Activated CD4-positive, alpha-beta memory T cell treated with anti-CD3 and anti-CD28 coated beads for 36 hours (primary cell): ENCODE measurements at regions of chr4 and their contacts with region 1.

Region 1: GRCh38 chr4:128574706-128575105 is 234.8 kb upstream of the JADE1 start:
- DNase-seq: peak; percentile 82
- H3K4me3 Mint-ChIP-seq: no peak overlapping the region
- H3K27ac Mint-ChIP-seq: no peak overlapping the region
- H3K4me1 Mint-ChIP-seq: no peaks in the 10 kb centered on the region
- H3K27me3 Mint-ChIP-seq: peaks cover 4% of the 10 kb centered on the region

Region 2: GRCh38 chr4:128191115-128191781 is 383.5 kb before region 1 on chr4:
- CTCF ChIA-PET with region 1: no interaction called
- POLR2A ChIA-PET with region 1: no interaction called
- intact Hi-C with region 1: loop called (anchors 5 kb)
- DNase-seq: peak; percentile 80
- H3K4me3 Mint-ChIP-seq: no peak overlapping the region
- H3K27ac Mint-ChIP-seq: no peak overlapping the region
- H3K4me1 Mint-ChIP-seq: peaks cover 3% of the 10 kb centered on the region
- H3K27me3 Mint-ChIP-seq: no peaks in the 10 kb centered on the region

Region 3: DNA sequence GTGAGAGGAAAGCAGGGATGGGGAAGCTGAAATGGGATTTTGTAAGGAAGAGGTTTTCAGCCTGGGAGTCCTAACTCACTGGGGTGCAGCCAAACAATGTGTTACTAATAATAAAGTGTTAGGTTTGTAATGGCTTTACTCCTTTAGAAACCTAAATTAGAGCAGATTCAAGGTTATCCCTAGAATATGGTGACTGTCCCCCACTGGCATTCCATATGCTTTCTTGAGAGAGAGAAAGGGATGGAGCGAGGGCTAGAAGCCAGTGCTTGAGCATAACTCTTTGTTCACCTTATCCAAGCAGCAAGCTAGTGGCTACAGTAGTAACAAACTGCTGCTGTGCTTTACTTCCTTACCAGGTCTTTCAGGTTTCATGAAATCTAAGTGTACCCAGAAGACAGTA is 38.0 kb before region 1 on chr4:
- CTCF ChIA-PET with region 1: no interaction called
- POLR2A ChIA-PET with region 1: no interaction called
- intact Hi-C with region 1: no loop called
- DNase-seq: no peak
- H3K4me3 Mint-ChIP-seq: no peak overlapping the region
- H3K27ac Mint-ChIP-seq: no peak overlapping the region
- H3K4me1 Mint-ChIP-seq: no peaks in the 10 kb centered on the region
- H3K27me3 Mint-ChIP-seq: no peaks in the 10 kb centered on the region

Region 4: DNA sequence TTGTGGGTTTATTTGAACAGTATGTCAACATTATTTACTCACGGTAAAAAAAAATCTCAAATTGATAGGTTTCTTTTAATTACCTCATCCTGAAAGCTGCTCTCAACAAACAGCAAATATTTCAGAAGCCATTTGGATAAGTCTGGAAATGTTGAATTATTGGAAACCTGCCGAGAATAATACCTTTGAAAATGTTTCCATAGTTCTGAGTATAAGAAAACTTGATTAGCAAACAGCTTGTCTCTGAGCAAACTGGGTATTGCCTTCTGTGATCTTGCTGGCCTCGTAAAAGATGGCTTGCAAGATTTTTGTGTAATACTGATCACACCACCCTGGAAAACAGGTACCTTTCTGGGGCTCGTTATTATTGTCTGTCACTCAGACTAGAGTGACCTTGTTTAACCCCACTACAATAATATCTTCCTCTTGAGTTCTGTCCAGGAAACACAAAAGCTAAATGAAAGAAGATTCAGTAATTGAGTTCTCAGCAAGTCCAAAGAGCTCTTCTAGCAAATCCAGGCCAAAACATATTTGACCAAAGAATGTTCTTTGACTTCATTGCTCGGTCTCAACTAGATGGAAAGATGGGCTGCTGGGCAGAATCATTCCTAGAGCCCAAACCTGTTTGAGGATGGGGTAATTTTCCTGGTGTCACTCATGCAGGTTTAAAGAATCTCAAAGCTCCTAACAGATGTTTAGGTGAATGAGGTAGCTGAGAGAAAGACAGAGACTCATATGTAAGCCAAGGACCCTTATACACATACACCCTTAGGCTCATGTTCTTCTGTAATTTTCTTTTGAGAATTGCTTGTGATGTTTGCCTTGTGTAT is 20.8 kb before region 1 on chr4:
- CTCF ChIA-PET with region 1: interaction called, 21 read pairs
- POLR2A ChIA-PET with region 1: no interaction called
- intact Hi-C with region 1: no loop called
- DNase-seq: no peak
- H3K4me3 Mint-ChIP-seq: peak overlapping the region; percentile 84
- H3K27ac Mint-ChIP-seq: no peak overlapping the region
- H3K4me1 Mint-ChIP-seq: peaks cover 14% of the 10 kb centered on the region
- H3K27me3 Mint-ChIP-seq: peaks cover 12% of the 10 kb centered on the region

Region 5: GRCh38 chr4:128675083-128675482 is 100.4 kb after region 1 on chr4:
- CTCF ChIA-PET with region 1: no interaction called
- POLR2A ChIA-PET with region 1: no interaction called
- intact Hi-C with region 1: loop called (anchors 10 kb)
- DNase-seq: no peak
- H3K4me3 Mint-ChIP-seq: no peak overlapping the region
- H3K27ac Mint-ChIP-seq: no peak overlapping the region
- H3K4me1 Mint-ChIP-seq: peaks cover 2% of the 10 kb centered on the region
- H3K27me3 Mint-ChIP-seq: peaks cover 3% of the 10 kb centered on the region